IMR-90 (cell line): ENCODE measurements at regions of chr2 and their contacts with region 1.

Region 1: DNA sequence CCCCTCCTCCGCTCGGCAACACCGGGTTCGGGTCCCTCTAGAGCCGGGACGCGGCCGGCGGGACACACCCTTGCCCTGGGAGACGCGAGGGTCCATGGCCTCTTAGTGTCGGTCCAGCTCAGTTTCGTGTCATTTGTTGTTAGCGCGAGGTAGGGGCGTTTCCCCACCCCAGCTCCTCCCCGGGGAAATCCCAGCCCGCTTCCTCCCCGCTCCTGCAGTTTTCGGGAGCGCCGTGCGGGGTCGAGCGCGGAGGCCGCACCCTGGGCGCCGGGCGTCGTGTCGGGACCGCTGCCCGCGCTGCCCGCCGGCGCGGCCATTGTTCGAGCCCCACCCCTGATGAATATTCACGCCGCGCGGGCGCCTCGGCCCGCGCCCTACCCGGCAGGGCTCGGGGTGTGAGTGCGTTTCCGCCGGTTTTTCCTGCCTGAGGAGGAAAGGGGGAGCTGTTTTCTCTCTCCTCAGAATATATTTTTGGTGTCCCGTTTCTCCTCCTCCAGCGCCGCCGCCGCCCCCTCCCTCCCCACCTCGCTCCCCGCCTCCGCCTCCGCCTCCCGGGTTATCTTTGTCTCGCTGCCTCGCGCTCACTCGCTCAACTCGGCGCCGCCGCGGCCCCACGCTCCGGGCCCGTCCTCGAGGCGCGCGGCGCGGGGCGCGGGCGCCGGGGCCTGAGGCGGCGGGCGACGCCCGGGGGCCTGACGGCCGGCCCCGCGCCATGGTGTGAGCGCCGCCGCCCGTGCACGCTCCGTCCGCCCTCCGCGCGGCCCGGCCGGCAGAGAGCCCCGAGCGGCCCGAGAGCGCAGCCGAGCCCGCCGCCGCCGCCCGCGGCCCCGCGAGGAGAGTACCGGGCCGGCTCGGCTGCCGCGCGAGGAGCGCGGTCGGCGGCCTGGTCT is at the start of gene MAP4K4:
- DNase-seq: peak; percentile 77
- ATAC-seq: peak; percentile 79
- H3K4me3 ChIP-seq: peak within 1 kb of the TSS; percentile 86
- H3K27ac ChIP-seq: peak within 1 kb of the TSS; percentile 89
- H3K4me1 ChIP-seq: peaks cover 6% of the 10 kb centered on the region
- H3K27me3 ChIP-seq: no peaks in the 10 kb centered on the region
- CTCF ChIP-seq: 0 out of 2 replicates have a peak, but pooled peaks have one; percentile 12
- POLR2A ChIP-seq: peak; percentile 70
- RAD21 ChIP-seq: peak; percentile 17
- total RNA-seq, gene MAP4K4: 124 and 130 TPM in 2 replicates

Region 2: GRCh38 chr2:101341901-101342624 is 355.3 kb before region 1 on chr2:
- CTCF ChIA-PET with region 1: interaction called, 4 read pairs
- POLR2A ChIA-PET with region 1: no interaction called
- dilution Hi-C with region 1: no loop called
- in situ Hi-C with region 1: no loop called
- intact Hi-C with region 1: loop called (anchors 2 kb)
- DNase-seq: peak; percentile 61
- ATAC-seq: peak; percentile 87
- H3K4me3 ChIP-seq: no peak overlapping the region
- H3K27ac ChIP-seq: no peak overlapping the region
- H3K4me1 ChIP-seq: peaks cover 2% of the 10 kb centered on the region; the same call in 1 of the 2 replicates
- H3K27me3 ChIP-seq: no peaks in the 10 kb centered on the region
- CTCF ChIP-seq: peak; percentile 84
- POLR2A ChIP-seq: no peak
- RAD21 ChIP-seq: peak; percentile 82

Region 3: DNA sequence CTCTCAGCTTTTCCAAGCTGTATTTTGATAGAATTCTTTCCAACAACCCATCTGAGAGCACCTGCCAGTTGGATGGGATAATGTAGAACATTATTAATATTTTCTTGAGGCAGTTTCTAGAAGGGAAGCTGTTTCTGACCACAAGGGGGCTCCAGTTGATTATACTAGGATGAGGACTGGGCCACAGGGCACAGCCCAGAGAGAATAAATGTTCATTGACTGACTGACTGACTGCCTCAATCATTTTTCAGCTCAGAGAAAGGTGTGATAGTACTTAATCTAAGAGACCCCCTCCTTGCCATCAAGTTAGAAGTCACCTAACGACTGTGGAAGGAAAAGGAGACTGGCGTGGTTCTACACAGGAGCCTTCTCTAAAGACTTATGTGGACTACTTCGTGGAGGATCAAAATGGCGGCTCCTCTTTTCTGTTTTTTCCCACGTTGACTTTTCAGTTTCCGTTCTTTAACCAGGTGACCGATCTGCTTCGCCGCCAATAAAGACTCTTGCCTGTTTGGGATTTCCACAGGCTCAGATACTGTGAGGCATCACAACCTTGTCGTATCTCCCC is 278.2 kb before region 1 on chr2:
- CTCF ChIA-PET with region 1: interaction called, 5 read pairs
- POLR2A ChIA-PET with region 1: no interaction called
- dilution Hi-C with region 1: no loop called
- in situ Hi-C with region 1: loop called (anchors 5 kb)
- intact Hi-C with region 1: loop called (anchors 1 kb)
- DNase-seq: peak; percentile 74
- ATAC-seq: peak; percentile 89
- H3K4me3 ChIP-seq: no peak overlapping the region
- H3K27ac ChIP-seq: no peak overlapping the region
- H3K4me1 ChIP-seq: no peaks in the 10 kb centered on the region
- H3K27me3 ChIP-seq: no peaks in the 10 kb centered on the region
- CTCF ChIP-seq: peak; percentile 92
- POLR2A ChIP-seq: no peak
- RAD21 ChIP-seq: peak; percentile 93

Region 4: DNA sequence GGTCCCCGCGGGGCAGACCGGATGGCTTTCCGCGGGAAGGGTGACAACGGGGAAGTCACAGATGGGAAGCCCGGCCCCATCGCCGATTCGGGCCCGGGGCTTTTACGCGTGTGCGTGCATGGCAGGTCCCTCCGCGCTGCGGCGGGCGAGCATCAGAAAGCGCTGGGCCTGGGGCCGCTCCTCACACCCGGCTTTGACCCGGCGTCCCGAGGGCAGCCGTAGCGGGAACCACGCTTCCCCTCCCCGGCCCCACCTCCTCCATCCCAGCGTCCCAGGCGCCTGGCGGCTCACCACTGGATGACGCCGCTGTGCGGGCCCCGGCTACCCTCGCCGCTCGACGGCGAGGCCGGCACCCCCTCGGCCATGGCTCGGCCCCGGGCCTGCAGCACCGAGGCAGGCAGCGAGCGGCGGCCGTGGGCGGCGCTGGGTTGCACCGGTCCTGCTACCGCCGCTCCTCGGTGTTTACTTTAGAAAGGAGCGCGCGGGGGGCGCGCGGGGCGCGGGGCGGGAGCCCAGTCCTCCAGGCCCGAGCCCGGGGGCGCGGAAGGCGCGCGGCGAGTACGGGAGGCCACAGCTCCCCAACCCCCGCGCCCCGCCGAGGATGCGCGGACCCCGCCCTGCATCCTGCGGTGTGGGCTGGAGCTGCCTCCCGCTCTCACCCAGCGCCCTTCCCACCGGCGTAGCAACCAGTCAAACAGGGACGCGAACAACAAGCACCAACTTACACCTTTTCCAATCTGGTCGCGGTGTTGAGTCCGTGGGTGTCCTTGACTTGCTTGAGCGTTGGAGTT is 223.3 kb before region 1 on chr2:
- CTCF ChIA-PET with region 1: no interaction called
- POLR2A ChIA-PET with region 1: interaction called, 6 read pairs
- dilution Hi-C with region 1: no loop called
- in situ Hi-C with region 1: no loop called
- intact Hi-C with region 1: loop called (anchors 5 kb)
- DNase-seq: peak; percentile 45
- ATAC-seq: peak; percentile 80
- H3K4me3 ChIP-seq: peak overlapping the region; percentile 67
- H3K27ac ChIP-seq: peak overlapping the region; percentile 92
- H3K4me1 ChIP-seq: peaks cover 4% of the 10 kb centered on the region
- H3K27me3 ChIP-seq: no peaks in the 10 kb centered on the region
- CTCF ChIP-seq: no peak
- POLR2A ChIP-seq: no peak
- RAD21 ChIP-seq: no peak

Region 5: GRCh38 chr2:101518578-101519492 is 178.5 kb before region 1 on chr2:
- CTCF ChIA-PET with region 1: no interaction called
- POLR2A ChIA-PET with region 1: no interaction called
- dilution Hi-C with region 1: no loop called
- in situ Hi-C with region 1: loop called (anchors 25 kb)
- intact Hi-C with region 1: loop called (anchors 2 kb)
- DNase-seq: peak; percentile 50
- ATAC-seq: peak; percentile 54
- H3K4me3 ChIP-seq: no peak overlapping the region
- H3K27ac ChIP-seq: no peak overlapping the region; the same call in 1 of the 2 replicates
- H3K4me1 ChIP-seq: peaks cover 24% of the 10 kb centered on the region
- H3K27me3 ChIP-seq: no peaks in the 10 kb centered on the region
- CTCF ChIP-seq: peak; percentile 56
- POLR2A ChIP-seq: no peak
- RAD21 ChIP-seq: peak; percentile 59

Region 6: GRCh38 chr2:101751875-101752619 is 54.7 kb after region 1 on chr2:
- CTCF ChIA-PET with region 1: no interaction called
- POLR2A ChIA-PET with region 1: interaction called, 3 read pairs
- dilution Hi-C with region 1: no loop called
- in situ Hi-C with region 1: no loop called
- intact Hi-C with region 1: loop called (anchors 2 kb)
- DNase-seq: no peak
- ATAC-seq: no peak
- H3K4me3 ChIP-seq: no peak overlapping the region
- H3K27ac ChIP-seq: no peak overlapping the region
- H3K4me1 ChIP-seq: peaks cover 30% of the 10 kb centered on the region
- H3K27me3 ChIP-seq: no peaks in the 10 kb centered on the region
- CTCF ChIP-seq: no peak
- POLR2A ChIP-seq: no peak
- RAD21 ChIP-seq: no peak

Region 7: DNA sequence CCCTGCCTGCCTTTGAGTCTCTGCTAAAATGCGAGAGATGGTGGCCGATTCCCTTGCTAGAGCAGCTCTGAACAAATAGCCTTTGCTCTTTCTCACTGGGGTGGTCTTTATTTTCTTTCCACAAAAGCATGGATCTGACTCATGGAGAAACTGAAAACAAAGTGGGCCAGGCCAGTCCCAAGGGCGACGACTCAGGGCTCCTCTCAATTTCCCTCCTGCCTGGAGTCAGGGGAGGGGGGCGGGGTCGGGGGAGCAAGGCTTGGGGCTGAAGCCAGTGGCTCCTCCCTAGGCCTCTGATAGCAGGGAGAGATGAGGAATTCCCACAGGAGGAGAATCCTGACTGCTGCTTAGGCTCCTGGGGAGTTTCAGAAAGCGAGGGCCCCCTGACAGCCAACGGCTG is 277.3 kb after region 1 on chr2:
- CTCF ChIA-PET with region 1: no interaction called
- POLR2A ChIA-PET with region 1: no interaction called
- dilution Hi-C with region 1: no loop called
- in situ Hi-C with region 1: no loop called
- intact Hi-C with region 1: no loop called
- DNase-seq: no peak
- ATAC-seq: peak; percentile 68
- H3K4me3 ChIP-seq: no peak overlapping the region
- H3K27ac ChIP-seq: peak overlapping the region; percentile 81; the same call in 1 of the 2 replicates
- H3K4me1 ChIP-seq: peaks cover 21% of the 10 kb centered on the region
- H3K27me3 ChIP-seq: no peaks in the 10 kb centered on the region; the same call in 1 of the 2 replicates
- CTCF ChIP-seq: no peak
- POLR2A ChIP-seq: no peak
- RAD21 ChIP-seq: no peak